AG04450 (cell line): ENCODE measurements at regions of chr19 and their contacts with region 1.

Region 1: GRCh38 chr19:13262450-13262849 is 112.2 kb downstream of the IER2 start:
- DNase-seq: no peak
- H3K4me3 ChIP-seq: no peak overlapping the region
- H3K27ac ChIP-seq: no peak overlapping the region
- H3K27me3 ChIP-seq: no peaks in the 10 kb centered on the region
- CTCF ChIP-seq: peak; percentile 62

Region 2: GRCh38 chr19:12974301-12975220 is 287.9 kb before region 1 on chr19:
- CTCF ChIA-PET with region 1: interaction called, 66 read pairs
- POLR2A ChIA-PET with region 1: interaction called, 3 read pairs
- DNase-seq: no peak
- H3K4me3 ChIP-seq: no peak overlapping the region
- H3K27ac ChIP-seq: no peak overlapping the region
- H3K27me3 ChIP-seq: no peaks in the 10 kb centered on the region
- CTCF ChIP-seq: no peak

Region 3: GRCh38 chr19:13328241-13328640 is 65.8 kb after region 1 on chr19:
- CTCF ChIA-PET with region 1: no interaction called
- POLR2A ChIA-PET with region 1: no interaction called
- DNase-seq: no peak
- H3K4me3 ChIP-seq: no peak overlapping the region
- H3K27ac ChIP-seq: no peak overlapping the region
- H3K27me3 ChIP-seq: no peaks in the 10 kb centered on the region
- CTCF ChIP-seq: no peak